Naive thymus-derived CD8-positive, alpha-beta T cell (primary cell): ENCODE measurements at regions of chr14 and their contacts with region 1.

Region 1: DNA sequence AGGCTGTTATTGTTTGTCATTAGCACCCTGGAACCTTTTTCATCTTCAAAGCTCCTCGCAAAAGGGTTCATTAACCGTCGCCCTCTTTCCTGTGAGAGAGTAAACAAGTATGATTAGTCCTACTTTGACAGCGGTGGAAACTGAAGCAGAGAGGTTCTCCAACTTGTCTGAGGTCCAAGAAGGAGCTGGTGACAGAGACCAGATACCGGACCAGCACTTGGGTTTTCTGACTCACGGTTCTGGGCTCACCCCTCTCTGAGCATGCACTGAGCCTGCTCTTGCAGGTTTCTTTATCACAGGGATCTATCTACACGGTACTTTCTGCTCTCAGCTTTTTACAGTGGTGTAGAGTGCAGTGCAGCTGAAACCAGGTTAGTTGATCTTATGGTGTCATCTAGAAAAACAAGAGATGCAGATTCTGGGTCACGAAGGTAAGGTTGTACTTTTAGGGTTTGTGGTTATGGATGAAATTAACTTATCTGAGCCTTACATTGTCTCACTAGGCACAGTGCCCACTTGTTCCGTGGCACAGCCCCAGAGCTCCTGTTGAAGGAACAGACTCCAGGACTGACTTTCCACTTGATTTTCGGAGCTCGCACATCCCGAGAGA is 62.1 kb downstream of the PPP2R5C start:
- DNase-seq: peak; percentile 30 to 86 (median 66)
- ATAC-seq: peak; percentile 66 to 69
- H3K4me3 Mint-ChIP-seq: peak overlapping the region; percentile 84 to 97 (median 92)
- H3K27ac Mint-ChIP-seq: peak overlapping the region; percentile 96 to 100 (median 100)
- H3K4me1 Mint-ChIP-seq: peaks cover 44 to 90% (median 88%) of the 10 kb centered on the region in 4 donors
- H3K27me3 Mint-ChIP-seq: no peaks in the 10 kb centered on the region

Region 2: GRCh38 chr14:101456246-101457175 is 367.1 kb before region 1 on chr14:
- POLR2A ChIA-PET with region 1: no interaction called
- DNase-seq: no peak
- ATAC-seq: no peak
- H3K4me3 Mint-ChIP-seq: peak overlapping the region in 5 of 10 donors; percentile 6 to 52 (median 25)
- H3K27ac Mint-ChIP-seq: peak overlapping the region in 1 of 10 donors; percentile 18
- H3K4me1 Mint-ChIP-seq: peaks cover 3 to 7% (median 5%) of the 10 kb centered on the region in 4 donors
- H3K27me3 Mint-ChIP-seq: peaks cover 33 to 68% (median 59%) of the 10 kb centered on the region in 5 donors

Region 3: GRCh38 chr14:101721951-101722661 is 101.5 kb before region 1 on chr14:
- POLR2A ChIA-PET with region 1: interaction called, 11 read pairs
- DNase-seq: peak; percentile 46 to 90 (median 84)
- ATAC-seq: peak; percentile 81 to 83
- H3K4me3 Mint-ChIP-seq: peak overlapping the region; percentile 72 to 89 (median 78)
- H3K27ac Mint-ChIP-seq: peak overlapping the region; percentile 89 to 99 (median 98)
- H3K4me1 Mint-ChIP-seq: peaks cover 19 to 64% (median 45%) of the 10 kb centered on the region in 4 donors
- H3K27me3 Mint-ChIP-seq: peaks cover 0 to 2% (median 0%) of the 10 kb centered on the region in 5 donors

Region 4: GRCh38 chr14:101772817-101773216 is 50.8 kb before region 1 on chr14:
- POLR2A ChIA-PET with region 1: interaction called, 31 read pairs
- DNase-seq: no peak
- ATAC-seq: no peak
- H3K4me3 Mint-ChIP-seq: no peak overlapping the region
- H3K27ac Mint-ChIP-seq: peak overlapping the region in 1 of 10 donors; percentile 36
- H3K4me1 Mint-ChIP-seq: peaks cover 12 to 54% (median 30%) of the 10 kb centered on the region in 4 donors
- H3K27me3 Mint-ChIP-seq: no peaks in the 10 kb centered on the region

Region 5: DNA sequence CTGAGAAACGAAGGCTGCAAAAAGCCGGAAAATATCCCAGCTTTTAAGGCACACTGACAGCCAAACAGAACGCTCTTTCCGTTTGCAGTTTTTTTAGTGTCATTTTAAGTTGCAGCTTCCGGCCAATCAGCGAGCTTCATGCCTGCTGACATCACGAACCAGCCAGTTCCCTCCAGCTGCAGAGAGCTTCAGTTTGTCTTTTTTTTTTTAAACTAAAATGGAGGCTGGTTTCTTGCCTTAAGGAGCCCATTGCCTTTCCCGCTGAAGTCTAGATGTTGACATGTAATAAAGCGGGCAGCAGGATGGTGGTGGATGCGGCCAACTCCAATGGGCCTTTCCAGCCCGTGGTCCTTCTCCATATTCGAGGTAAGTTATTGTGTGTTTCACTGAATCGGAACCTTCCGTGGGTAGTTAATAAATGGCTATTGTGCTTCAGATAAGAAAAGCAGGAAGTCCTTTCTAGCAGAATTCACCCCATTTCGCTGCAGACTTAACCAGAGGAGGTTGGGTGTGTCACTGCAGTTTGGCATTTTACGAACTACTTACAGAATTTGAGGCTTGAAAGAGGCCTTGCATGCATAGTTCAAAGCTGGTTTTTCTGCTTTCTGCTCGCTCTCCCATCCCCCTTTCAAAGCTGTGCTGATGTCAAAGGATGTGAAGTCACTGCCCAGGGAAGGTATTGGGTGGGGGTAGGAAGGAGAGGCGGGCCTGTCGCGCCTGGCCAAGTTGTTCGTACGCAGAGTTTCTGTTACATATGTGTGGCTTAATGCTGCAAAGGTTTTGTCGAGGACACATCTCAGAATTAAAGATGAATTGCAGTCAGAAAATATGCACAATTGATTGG is 13.7 kb before region 1 on chr14:
- POLR2A ChIA-PET with region 1: interaction called, 312 read pairs
- DNase-seq: peak; percentile 64 to 96 (median 90)
- ATAC-seq: peak; percentile 84 to 89
- H3K4me3 Mint-ChIP-seq: peak overlapping the region; percentile 93 to 98 (median 96)
- H3K27ac Mint-ChIP-seq: peak overlapping the region; percentile 97 to 100 (median 99)
- H3K4me1 Mint-ChIP-seq: peaks cover 23 to 55% (median 46%) of the 10 kb centered on the region in 4 donors
- H3K27me3 Mint-ChIP-seq: no peaks in the 10 kb centered on the region

Region 6: DNA sequence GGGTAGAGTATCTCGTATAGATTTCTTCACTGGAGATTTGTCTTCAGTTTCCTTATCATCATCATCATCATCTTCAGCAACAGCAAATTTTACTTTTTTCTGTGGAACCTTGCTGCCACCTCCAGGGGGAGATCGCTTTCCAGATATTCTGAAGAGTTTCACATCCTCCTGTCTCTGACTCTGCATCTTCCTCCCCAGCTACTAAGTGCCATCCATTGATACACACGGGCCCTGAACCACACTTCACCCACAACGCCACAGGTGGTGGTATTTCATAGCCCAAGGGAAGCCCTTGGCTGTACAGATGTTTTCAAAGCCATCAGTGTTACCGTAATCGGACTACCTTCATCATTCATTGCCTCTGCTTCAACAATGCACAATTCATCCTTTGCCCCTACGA is 20.0 kb after region 1 on chr14:
- POLR2A ChIA-PET with region 1: interaction called, 13 read pairs
- DNase-seq: peak in 9 of 10 donors; percentile 46 to 76 (median 56)
- ATAC-seq: peak; percentile 72 to 82
- H3K4me3 Mint-ChIP-seq: peak overlapping the region in 9 of 10 donors; percentile 15 to 69 (median 40)
- H3K27ac Mint-ChIP-seq: peak overlapping the region; percentile 65 to 95 (median 86)
- H3K4me1 Mint-ChIP-seq: peaks cover 39 to 95% (median 91%) of the 10 kb centered on the region in 4 donors
- H3K27me3 Mint-ChIP-seq: no peaks in the 10 kb centered on the region